Endothelial cell of umbilical vein (primary cell): ENCODE measurements at regions of chr1 and their contacts with region 1.

Region 1: DNA sequence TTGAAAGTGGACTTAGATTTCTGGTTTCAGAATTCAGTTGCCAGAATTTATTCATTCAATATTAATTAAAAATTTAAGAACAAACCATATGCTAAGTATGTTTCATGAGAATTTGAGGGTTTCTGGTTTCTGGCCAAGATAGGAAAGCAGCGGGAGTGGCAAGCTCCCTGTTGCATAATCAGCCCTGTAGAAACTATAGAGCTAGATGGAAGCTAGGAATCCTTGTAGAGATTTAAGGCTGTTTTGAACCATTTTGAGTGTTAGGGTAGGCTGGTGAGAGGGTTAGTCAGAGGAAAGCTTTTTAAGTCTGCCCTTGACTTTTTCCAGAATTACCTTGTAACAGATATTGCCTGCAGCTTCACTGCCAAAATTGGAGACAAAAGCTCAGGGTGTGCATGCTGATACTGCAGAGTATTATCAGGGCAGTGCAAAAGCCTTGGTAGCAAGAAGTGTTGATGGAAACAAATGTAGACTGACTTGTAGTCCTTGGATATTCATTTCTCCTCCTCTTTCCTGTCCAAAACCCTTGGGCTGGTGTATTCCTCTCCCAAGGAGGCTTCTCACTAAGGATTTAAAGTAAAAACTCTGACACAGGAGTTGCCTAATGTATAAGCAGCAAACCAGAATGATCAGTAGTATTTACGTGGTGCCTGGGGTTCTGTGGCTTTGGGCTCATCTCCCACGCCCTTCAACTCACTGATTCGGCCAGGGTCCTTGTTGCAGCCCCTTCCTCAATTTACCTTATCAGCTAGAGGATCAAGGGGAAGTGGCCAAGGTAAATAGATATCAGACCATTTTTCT is 12.6 kb upstream of the GIPC2 start:
- DNase-seq: no peak
- H3K4me3 ChIP-seq: no peak overlapping the region
- H3K27ac ChIP-seq: no peak overlapping the region
- H3K4me1 ChIP-seq: peaks cover 8% of the 10 kb centered on the region
- H3K27me3 ChIP-seq: no peaks in the 10 kb centered on the region
- CTCF ChIP-seq: no peak
- POLR2A ChIP-seq: no peak

Region 2: GRCh38 chr1:77926561-77927357 is 106.4 kb before region 1 on chr1:
- CTCF ChIA-PET with region 1: no interaction called
- POLR2A ChIA-PET with region 1: no interaction called
- dilution Hi-C with region 1: no loop called
- intact Hi-C with region 1: no loop called
- DNase-seq: no peak
- H3K4me3 ChIP-seq: no peak overlapping the region
- H3K27ac ChIP-seq: no peak overlapping the region
- H3K4me1 ChIP-seq: peaks cover 7% of the 10 kb centered on the region
- H3K27me3 ChIP-seq: no peaks in the 10 kb centered on the region
- CTCF ChIP-seq: no peak
- POLR2A ChIP-seq: no peak

Region 3: GRCh38 chr1:78019018-78019417 is 14.2 kb before region 1 on chr1:
- CTCF ChIA-PET with region 1: interaction called, 10 read pairs
- POLR2A ChIA-PET with region 1: no interaction called
- dilution Hi-C with region 1: no loop called
- intact Hi-C with region 1: no loop called
- DNase-seq: no peak
- H3K4me3 ChIP-seq: no peak overlapping the region
- H3K27ac ChIP-seq: no peak overlapping the region
- H3K4me1 ChIP-seq: no peaks in the 10 kb centered on the region
- H3K27me3 ChIP-seq: no peaks in the 10 kb centered on the region
- CTCF ChIP-seq: no peak
- POLR2A ChIP-seq: no peak

Region 4: GRCh38 chr1:78277253-78277652 is 244.1 kb after region 1 on chr1:
- CTCF ChIA-PET with region 1: no interaction called
- POLR2A ChIA-PET with region 1: no interaction called
- dilution Hi-C with region 1: no loop called
- intact Hi-C with region 1: no loop called
- DNase-seq: no peak
- H3K4me3 ChIP-seq: no peak overlapping the region
- H3K27ac ChIP-seq: no peak overlapping the region
- H3K4me1 ChIP-seq: peaks cover 2% of the 10 kb centered on the region
- H3K27me3 ChIP-seq: peaks cover 2% of the 10 kb centered on the region in 2 experiments
- CTCF ChIP-seq: no peak
- POLR2A ChIP-seq: no peak